ENCODE measurements at regions of chr2 and their contacts with region 1.

Region 1: DNA sequence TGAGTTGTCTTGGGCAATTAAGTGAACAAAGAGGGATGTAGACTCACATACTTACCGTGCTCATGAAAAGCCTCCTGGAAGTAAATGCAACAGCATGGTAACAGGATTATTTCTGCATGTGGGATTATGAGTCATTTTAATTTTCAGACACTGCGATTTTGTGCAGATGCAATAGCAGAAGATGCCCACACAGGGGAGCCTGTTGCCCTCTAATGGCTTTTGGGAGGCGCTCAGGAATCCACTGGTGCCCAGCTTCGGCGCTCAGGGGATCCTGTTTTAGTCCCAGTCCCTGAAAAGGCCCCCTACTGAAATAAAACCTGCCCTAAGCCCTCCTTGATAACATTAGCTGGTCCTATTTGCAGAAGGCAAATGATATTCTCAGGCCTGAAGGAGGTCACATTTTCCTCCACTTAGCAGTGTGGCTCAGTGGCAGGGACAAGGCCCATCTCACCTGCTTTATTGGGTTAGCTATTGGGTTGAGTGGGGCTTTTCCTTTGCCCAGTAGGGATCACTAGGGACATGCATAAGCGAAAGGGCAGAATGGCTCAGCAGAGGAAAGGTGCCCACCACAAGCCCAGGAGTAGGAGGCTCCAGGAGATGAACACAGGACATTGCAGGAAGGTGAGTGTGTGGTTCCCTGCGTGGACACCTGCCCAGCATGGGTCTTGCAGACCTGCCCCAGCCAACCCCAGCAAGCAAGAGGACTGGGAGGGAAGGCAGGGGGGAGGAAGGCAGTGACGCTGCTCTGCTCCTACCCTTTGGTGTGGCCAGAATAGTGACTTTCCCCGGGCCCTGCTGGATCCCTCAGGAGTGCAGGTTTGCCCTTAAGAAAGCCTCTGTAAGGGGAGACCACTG is 26.5 kb upstream of the KCNS3 start:
- DNase-seq: peak; percentile 76
- CTCF ChIP-seq: peak; percentile 79

Region 2: DNA sequence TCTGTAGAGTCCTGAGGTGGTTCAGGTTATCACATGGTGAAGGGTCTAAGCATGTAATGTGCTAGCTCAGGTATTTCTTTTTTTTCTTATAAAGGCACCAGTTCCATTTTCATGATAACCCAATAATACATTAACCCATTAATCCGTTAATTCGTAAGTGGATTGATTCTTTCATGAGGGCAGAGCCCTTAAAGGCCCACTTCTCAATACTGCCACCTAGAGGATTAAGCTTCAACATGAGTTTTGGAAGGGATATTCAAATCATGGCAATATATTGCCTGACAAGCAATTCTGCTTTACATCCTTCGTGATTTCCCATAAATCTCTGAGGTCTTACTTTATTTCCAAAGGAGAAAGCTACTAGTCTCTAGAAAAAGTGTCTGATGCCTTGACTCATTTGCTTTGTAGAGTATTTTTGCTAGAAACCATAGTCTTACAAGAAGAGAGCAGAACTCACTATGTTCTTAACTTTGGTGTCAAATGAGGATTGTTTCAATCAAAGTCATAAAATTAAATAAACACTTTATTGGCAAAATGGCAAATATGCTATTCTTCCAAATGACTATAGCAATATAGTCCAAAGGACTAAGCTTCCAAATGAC is 297.8 kb after region 1 on chr2:
- in situ Hi-C with region 1: loop called (anchors 25 kb)
- DNase-seq: peak; percentile 43
- CTCF ChIP-seq: peak; percentile 53

Region 3: DNA sequence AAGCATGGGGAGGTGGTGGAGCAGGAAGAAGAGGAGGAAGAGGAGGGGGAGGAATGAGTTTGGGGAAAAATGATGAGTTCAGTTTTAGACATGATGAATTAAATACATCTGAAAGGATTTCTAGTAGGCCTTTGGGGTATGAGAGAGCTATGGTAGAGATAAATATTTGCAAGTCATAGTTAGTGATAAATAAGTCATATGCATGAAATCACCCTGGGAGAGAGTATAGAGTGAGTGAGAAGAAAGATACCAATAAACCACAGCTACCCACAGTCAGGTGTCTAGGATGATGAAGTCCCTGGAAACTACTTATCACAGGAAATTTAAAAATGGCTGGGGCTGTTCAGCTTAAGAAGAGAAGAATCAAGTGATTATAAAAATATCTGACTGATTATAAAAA is 468.0 kb after region 1 on chr2:
- in situ Hi-C with region 1: no loop called
- DNase-seq: no peak
- CTCF ChIP-seq: no peak

Region 4: DNA sequence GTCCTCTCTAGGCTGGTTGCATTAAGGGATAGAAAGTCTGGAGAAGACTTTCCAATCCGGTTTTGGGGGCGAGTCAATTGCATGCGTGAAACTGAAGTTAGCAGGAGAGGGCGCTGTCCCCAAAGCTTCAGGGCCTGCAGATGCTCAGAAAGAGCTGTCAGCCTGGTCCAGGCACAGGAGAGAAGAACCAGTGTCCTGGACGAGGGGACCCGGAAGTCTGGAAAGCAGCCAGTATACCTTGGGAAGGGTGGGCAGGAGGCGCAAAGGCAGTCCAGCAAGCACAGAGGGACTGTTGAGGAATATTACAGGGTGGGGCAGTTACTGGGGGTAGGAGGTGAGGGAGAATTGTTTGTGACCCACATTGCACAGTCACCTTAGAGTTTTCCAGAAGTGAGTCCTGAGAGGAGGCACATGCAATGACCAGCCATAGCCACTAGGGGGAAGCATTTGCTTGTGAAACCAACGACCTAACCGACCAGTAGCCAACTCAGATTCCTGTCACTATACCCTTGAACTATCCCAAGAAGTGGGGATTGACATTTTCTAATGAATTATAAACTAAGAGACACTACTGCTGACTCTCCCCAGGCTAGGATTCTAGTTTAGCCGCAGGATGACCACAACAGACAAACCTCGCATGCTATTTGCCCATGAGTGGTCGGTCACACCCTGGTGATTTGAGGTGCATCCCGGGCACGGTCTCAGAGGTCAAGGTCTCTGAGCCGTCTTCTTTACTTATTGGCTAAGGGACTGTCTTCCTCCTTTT is 535.7 kb after region 1 on chr2:
- in situ Hi-C with region 1: loop called (anchors 25 kb)
- DNase-seq: peak; percentile 56
- CTCF ChIP-seq: peak; percentile 76